CD8-positive, alpha-beta T cell (primary cell): ENCODE measurements at regions of chr2 and their contacts with region 1.

Region 1: GRCh38 chr2:64609227-64609941 is 44.3 kb downstream of the SERTAD2 start:
- DNase-seq: peak; percentile 37 to 85 (median 66)
- ATAC-seq: peak; percentile 65
- H3K4me3 ChIP-seq: peak overlapping the region; percentile 56 to 63
- H3K4me3 Mint-ChIP-seq: peak overlapping the region; percentile 79
- H3K27ac ChIP-seq: peak overlapping the region in 1 of 2 experiments; percentile 49
- H3K27ac Mint-ChIP-seq: peak overlapping the region; percentile 66
- H3K4me1 ChIP-seq: peaks cover 26% of the 10 kb centered on the region
- H3K4me1 Mint-ChIP-seq: peaks cover 29% of the 10 kb centered on the region
- H3K27me3 ChIP-seq: no peaks in the 10 kb centered on the region
- H3K27me3 Mint-ChIP-seq: no peaks in the 10 kb centered on the region
- CTCF ChIP-seq: peak; percentile 23

Region 2: GRCh38 chr2:64228126-64228678 is 381.2 kb before region 1 on chr2:
- CTCF ChIA-PET with region 1: no interaction called
- POLR2A ChIA-PET with region 1: no interaction called
- intact Hi-C with region 1: no loop called
- DNase-seq: peak; percentile 22 to 73 (median 54)
- ATAC-seq: peak; percentile 89
- H3K4me3 ChIP-seq: peak overlapping the region; percentile 53 to 56
- H3K4me3 Mint-ChIP-seq: peak overlapping the region; percentile 91
- H3K27ac ChIP-seq: no peak overlapping the region
- H3K27ac Mint-ChIP-seq: peak overlapping the region; percentile 63
- H3K4me1 ChIP-seq: no peaks in the 10 kb centered on the region
- H3K4me1 Mint-ChIP-seq: peaks cover 19% of the 10 kb centered on the region
- H3K27me3 ChIP-seq: no peaks in the 10 kb centered on the region
- H3K27me3 Mint-ChIP-seq: peaks cover 2% of the 10 kb centered on the region
- CTCF ChIP-seq: no peak

Region 3: GRCh38 chr2:64910972-64911433 is 301.6 kb after region 1 on chr2:
- CTCF ChIA-PET with region 1: no interaction called
- POLR2A ChIA-PET with region 1: no interaction called
- intact Hi-C with region 1: no loop called
- DNase-seq: no peak
- ATAC-seq: no peak
- H3K4me3 ChIP-seq: no peak overlapping the region
- H3K4me3 Mint-ChIP-seq: no peak overlapping the region
- H3K27ac ChIP-seq: no peak overlapping the region
- H3K27ac Mint-ChIP-seq: no peak overlapping the region
- H3K4me1 ChIP-seq: no peaks in the 10 kb centered on the region
- H3K4me1 Mint-ChIP-seq: peaks cover 8% of the 10 kb centered on the region
- H3K27me3 ChIP-seq: no peaks in the 10 kb centered on the region
- H3K27me3 Mint-ChIP-seq: no peaks in the 10 kb centered on the region
- CTCF ChIP-seq: no peak

Region 4: GRCh38 chr2:65227425-65228262 is 618.3 kb after region 1 on chr2 and contains the start of gene ACTR2:
- CTCF ChIA-PET with region 1: no interaction called
- POLR2A ChIA-PET with region 1: no interaction called
- intact Hi-C with region 1: loop called in 1 of 2 experiments (anchors 2 kb)
- DNase-seq: peak; percentile 87 to 98 (median 94)
- ATAC-seq: peak; percentile 94
- H3K4me3 ChIP-seq: peak within 1 kb of the TSS; percentile 74 to 89
- H3K4me3 Mint-ChIP-seq: peak within 1 kb of the TSS; percentile 99
- H3K27ac ChIP-seq: peak within 1 kb of the TSS; percentile 94 to 98
- H3K27ac Mint-ChIP-seq: peak within 1 kb of the TSS; percentile 99
- H3K4me1 ChIP-seq: peaks cover 43% of the 10 kb centered on the region
- H3K4me1 Mint-ChIP-seq: peaks cover 47% of the 10 kb centered on the region
- H3K27me3 ChIP-seq: no peaks in the 10 kb centered on the region
- H3K27me3 Mint-ChIP-seq: no peaks in the 10 kb centered on the region
- CTCF ChIP-seq: no peak
- total RNA-seq, gene ACTR2: 101 to 117 TPM

Region 5: DNA sequence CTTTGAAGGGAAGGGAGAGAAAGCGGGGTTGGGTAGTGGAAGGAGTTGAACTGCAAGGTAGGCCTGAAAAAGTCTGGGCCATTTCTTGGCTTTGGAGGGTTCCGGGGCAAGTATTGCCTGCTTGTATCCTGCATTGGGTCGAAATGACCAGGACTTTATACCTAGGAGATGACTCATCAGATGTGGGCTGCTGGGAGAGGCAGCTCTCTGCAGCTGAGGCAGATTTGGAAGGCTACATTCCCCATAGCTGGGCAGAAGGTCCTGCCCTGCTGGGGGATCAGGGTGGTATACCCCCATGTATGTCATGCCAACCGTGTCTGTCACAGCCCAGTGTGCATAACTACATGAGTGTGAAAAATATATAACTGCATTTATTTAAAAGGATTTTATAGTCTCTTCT is 994.9 kb after region 1 on chr2:
- CTCF ChIA-PET with region 1: no interaction called
- POLR2A ChIA-PET with region 1: no interaction called
- intact Hi-C with region 1: no loop called
- DNase-seq: no peak
- ATAC-seq: no peak
- H3K4me3 ChIP-seq: no peak overlapping the region
- H3K4me3 Mint-ChIP-seq: no peak overlapping the region
- H3K27ac ChIP-seq: no peak overlapping the region
- H3K27ac Mint-ChIP-seq: no peak overlapping the region
- H3K4me1 ChIP-seq: no peaks in the 10 kb centered on the region
- H3K4me1 Mint-ChIP-seq: peaks cover 7% of the 10 kb centered on the region
- H3K27me3 ChIP-seq: peaks cover 0 to 2% of the 10 kb centered on the region in 2 experiments
- H3K27me3 Mint-ChIP-seq: no peaks in the 10 kb centered on the region
- CTCF ChIP-seq: no peak